HepG2 (cell line): ENCODE measurements at regions of chr14 and their contacts with region 1.

Region 1: GRCh38 chr14:45426670-45427282 is 173.8 kb upstream of the MIS18BP1 start:
- DNase-seq: peak; percentile 49
- ATAC-seq: peak; percentile 76
- H3K4me3 ChIP-seq: no peak overlapping the region
- H3K27ac ChIP-seq: no peak overlapping the region
- H3K4me1 ChIP-seq: no peaks in the 10 kb centered on the region
- H3K27me3 ChIP-seq: no peaks in the 10 kb centered on the region; a peak in 1 of 5 replicates
- CTCF ChIP-seq: peak; percentile 65
- EP300 ChIP-seq: no peak
- POLR2A ChIP-seq: no peak
- RAD21 ChIP-seq: no peak

Region 2: GRCh38 chr14:44782775-44783238 is 644.0 kb before region 1 on chr14:
- CTCF ChIA-PET with region 1: no interaction called
- POLR2A ChIA-PET with region 1: no interaction called
- in situ Hi-C with region 1: no loop called
- intact Hi-C with region 1: no loop called
- DNase-seq: no peak
- ATAC-seq: no peak
- H3K4me3 ChIP-seq: no peak overlapping the region
- H3K27ac ChIP-seq: no peak overlapping the region
- H3K4me1 ChIP-seq: no peaks in the 10 kb centered on the region
- H3K27me3 ChIP-seq: no peaks in the 10 kb centered on the region
- CTCF ChIP-seq: no peak
- EP300 ChIP-seq: no peak
- POLR2A ChIP-seq: no peak
- RAD21 ChIP-seq: no peak

Region 3: DNA sequence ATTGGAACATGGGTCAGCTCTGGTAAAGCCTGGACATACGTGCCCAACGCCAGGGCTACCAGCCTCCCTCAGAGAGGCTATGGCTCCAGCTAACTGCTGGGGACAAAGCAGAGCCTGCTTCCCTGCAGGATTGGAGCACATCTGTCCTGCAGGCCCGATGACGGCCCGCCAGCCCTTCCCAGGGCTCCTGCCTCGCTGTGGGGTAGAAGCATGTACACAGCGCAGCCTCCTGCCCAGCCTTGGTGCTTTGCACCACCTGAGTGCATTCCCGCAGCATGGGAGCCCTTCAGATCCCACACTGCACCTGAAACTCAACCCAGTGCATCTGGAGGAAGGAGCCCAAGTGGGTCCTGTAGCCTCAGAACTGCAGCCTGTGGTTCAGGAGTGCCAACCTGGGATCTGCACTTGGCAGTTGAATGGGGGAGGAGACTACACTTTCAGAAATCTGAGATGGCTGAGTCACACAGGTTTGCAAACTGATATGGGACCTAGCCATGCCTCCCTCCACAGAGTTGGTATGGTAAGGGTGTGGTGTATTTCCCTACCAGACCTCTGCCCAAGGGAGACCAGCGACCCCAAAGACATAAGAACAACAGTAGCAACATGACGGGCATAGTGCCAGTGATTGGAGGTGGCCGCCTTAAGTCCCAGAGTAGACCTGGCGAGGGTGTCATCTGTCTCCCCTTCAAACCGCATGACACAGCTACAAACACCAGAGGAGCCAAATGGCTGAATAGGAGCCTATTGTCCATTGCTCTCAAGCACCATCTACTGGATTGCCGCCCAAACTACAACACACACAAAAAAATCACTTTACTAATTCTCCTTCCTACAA is 100.2 kb after region 1 on chr14:
- CTCF ChIA-PET with region 1: interaction called, 19 read pairs
- POLR2A ChIA-PET with region 1: no interaction called
- in situ Hi-C with region 1: loop called (anchors 5 kb)
- intact Hi-C with region 1: loop called (anchors 1 kb)
- DNase-seq: peak; percentile 63
- ATAC-seq: peak; percentile 99
- H3K4me3 ChIP-seq: no peak overlapping the region
- H3K27ac ChIP-seq: no peak overlapping the region
- H3K4me1 ChIP-seq: no peaks in the 10 kb centered on the region
- H3K27me3 ChIP-seq: no peaks in the 10 kb centered on the region
- CTCF ChIP-seq: peak; percentile 67
- EP300 ChIP-seq: no peak
- POLR2A ChIP-seq: no peak
- RAD21 ChIP-seq: no peak

Region 4: DNA sequence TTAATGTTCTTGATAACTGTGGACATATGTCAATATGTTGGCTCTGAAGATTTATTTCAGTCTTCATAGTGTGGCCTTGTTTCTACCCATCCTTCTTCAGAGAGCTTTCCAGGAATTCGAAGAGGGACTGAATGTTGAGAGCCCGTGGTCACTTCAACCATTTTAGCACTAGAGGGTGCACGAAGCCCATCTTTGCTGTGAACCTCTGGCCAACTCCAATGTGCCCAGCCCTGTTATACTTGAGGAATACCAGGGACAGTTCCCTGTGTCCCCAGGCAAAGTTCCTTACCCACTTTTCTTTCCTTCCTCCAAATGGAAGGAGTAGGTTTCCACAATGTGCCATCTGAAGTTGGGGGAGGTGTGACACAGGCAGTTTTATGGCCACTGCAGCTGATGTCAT is 621.4 kb after region 1 on chr14:
- CTCF ChIA-PET with region 1: no interaction called
- POLR2A ChIA-PET with region 1: no interaction called
- in situ Hi-C with region 1: no loop called
- intact Hi-C with region 1: loop called (anchors 10 kb)
- DNase-seq: peak; percentile 4
- ATAC-seq: no peak
- H3K4me3 ChIP-seq: no peak overlapping the region
- H3K27ac ChIP-seq: no peak overlapping the region
- H3K4me1 ChIP-seq: no peaks in the 10 kb centered on the region
- H3K27me3 ChIP-seq: no peaks in the 10 kb centered on the region
- CTCF ChIP-seq: peak; percentile 68
- EP300 ChIP-seq: no peak
- POLR2A ChIP-seq: no peak
- RAD21 ChIP-seq: no peak

Region 5: GRCh38 chr14:47278234-47278842 is 1851.6 kb after region 1 on chr14:
- CTCF ChIA-PET with region 1: no interaction called
- POLR2A ChIA-PET with region 1: no interaction called
- in situ Hi-C with region 1: no loop called
- intact Hi-C with region 1: loop called (anchors 10 kb)
- DNase-seq: peak; percentile 11
- ATAC-seq: peak; percentile 86
- H3K4me3 ChIP-seq: no peak overlapping the region
- H3K27ac ChIP-seq: no peak overlapping the region
- H3K4me1 ChIP-seq: no peaks in the 10 kb centered on the region
- H3K27me3 ChIP-seq: no peaks in the 10 kb centered on the region
- CTCF ChIP-seq: peak; percentile 70
- EP300 ChIP-seq: no peak
- POLR2A ChIP-seq: no peak
- RAD21 ChIP-seq: no peak